ENCODE measurements at regions of chr20 and their contacts with region 1.

Region 1: DNA sequence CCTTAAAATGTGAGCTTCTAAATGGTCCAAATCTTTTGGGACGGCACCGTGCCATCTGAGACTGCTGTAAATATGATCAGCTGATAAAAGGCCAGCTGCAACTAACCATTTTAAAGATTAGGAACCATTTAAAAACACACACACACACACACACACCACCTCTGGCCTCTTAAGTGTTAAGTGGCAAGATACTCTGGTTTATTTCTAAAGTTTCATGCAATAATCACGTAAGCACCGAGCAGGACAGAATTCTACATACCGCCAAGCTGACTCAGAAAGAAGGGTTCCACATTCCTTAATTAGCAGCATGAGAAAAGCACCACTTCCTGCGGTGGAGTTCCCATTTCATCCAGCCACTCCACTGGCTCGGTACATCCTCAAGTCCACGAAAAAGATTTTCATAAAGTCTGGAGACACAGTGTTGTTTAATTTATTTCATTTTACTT is 17.8 kb upstream of the ZNF217 start:
- DNase-seq: no peak
- ATAC-seq: no peak
- H3K4me3 Mint-ChIP-seq: no peak overlapping the region
- H3K27ac Mint-ChIP-seq: peak overlapping the region in 9 of 10 donors; percentile 24 to 85 (median 69)
- H3K4me1 Mint-ChIP-seq: peaks cover 13 to 36% (median 28%) of the 10 kb centered on the region in 4 donors
- H3K27me3 Mint-ChIP-seq: no peaks in the 10 kb centered on the region

Region 2: GRCh38 chr20:53524589-53525312 is 86.7 kb before region 1 on chr20:
- POLR2A ChIA-PET with region 1: no interaction called
- DNase-seq: no peak
- ATAC-seq: no peak
- H3K4me3 Mint-ChIP-seq: no peak overlapping the region
- H3K27ac Mint-ChIP-seq: no peak overlapping the region
- H3K4me1 Mint-ChIP-seq: no peaks in the 10 kb centered on the region
- H3K27me3 Mint-ChIP-seq: peaks cover 0 to 4% (median 0%) of the 10 kb centered on the region in 5 donors

Region 3: DNA sequence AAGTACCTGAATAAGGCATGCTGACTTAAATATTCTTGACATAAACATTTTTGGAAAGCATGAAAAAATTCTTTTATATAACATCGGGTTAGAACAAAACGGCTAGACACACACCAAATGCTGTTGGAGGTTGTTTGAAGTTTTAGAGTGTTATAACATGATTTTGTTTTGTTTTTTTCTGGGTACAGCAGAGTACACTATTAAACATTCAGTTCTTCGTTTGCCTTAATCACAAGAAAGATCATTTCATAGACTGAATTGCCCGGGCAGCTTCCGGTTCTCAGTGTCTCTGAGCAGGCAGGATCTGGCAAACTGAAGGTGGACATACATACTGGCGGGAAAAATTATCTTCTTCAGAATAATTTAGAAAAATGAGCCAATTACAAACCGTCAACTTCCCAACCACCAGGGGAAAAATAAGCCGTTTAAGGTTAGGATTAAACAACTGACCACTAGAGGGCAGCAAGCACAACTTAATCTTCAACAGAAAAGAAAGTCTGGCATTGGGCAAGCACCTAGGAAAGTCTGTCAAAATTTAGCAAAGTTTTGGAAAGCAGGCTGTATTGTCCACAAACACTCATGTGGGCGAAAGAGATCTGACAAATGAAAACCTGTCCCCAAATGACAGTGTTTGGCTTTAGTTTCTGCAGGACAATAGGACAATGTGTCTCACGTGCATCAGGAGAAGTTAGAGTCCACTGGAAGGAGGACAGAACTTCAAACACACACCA is 32.8 kb before region 1 on chr20:
- POLR2A ChIA-PET with region 1: interaction called, 10 read pairs
- DNase-seq: peak in 9 of 10 donors; percentile 51 to 89 (median 74)
- ATAC-seq: peak; percentile 33 to 49
- H3K4me3 Mint-ChIP-seq: peak overlapping the region; percentile 79 to 94 (median 92)
- H3K27ac Mint-ChIP-seq: peak overlapping the region; percentile 91 to 99 (median 96)
- H3K4me1 Mint-ChIP-seq: peaks cover 31 to 94% (median 82%) of the 10 kb centered on the region in 4 donors
- H3K27me3 Mint-ChIP-seq: no peaks in the 10 kb centered on the region

Region 4: GRCh38 chr20:53623454-53624211 is 12.2 kb after region 1 on chr20:
- POLR2A ChIA-PET with region 1: interaction called, 77 read pairs
- DNase-seq: peak in 4 of 10 donors; percentile 5 to 37 (median 20)
- ATAC-seq: peak; percentile 63 to 74
- H3K4me3 Mint-ChIP-seq: peak overlapping the region; percentile 76 to 90 (median 82)
- H3K27ac Mint-ChIP-seq: peak overlapping the region; percentile 89 to 98 (median 94)
- H3K4me1 Mint-ChIP-seq: peaks cover 14 to 52% (median 49%) of the 10 kb centered on the region in 4 donors
- H3K27me3 Mint-ChIP-seq: no peaks in the 10 kb centered on the region

Region 5: DNA sequence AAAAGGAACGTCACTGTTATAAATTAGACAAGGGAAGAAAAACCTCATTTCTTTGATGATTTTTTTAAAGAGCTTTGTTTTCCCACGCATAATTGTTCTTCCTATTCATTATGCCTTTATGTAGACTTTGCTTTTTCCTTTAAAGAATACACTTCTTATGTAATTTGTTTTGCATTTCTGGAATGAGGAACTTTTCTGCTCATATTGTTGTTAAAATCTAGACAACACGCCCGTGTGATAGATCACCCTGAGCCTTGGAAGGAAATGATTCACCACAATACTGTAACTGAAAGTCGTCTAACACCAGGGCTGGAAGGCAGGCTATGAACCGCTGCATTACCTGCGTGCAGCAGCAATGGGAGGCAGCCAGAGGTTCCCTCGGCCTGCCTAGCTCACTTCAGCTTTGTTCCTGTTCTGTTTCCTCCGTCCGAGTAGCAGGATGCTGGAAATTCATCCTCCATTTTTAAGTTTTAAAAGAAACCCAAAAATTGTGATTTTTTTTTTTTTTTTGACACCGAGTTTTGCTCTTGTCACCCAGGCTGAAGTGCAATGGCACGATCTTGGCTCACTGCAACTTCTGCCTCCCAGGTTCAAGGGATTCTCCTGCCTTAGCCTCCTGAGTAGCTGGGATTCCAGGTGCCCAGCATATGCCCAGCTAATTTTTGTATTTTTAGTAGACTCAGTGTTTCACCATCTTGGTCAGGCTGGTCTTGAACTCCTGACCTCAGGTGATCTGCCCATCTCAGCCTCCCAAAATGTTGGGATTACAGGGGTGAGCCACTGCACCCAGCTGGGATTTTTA is 31.8 kb after region 1 on chr20:
- POLR2A ChIA-PET with region 1: interaction called, 42 read pairs
- DNase-seq: peak; percentile 44 to 80 (median 62)
- ATAC-seq: peak; percentile 94 to 97
- H3K4me3 Mint-ChIP-seq: peak overlapping the region; percentile 70 to 94 (median 84)
- H3K27ac Mint-ChIP-seq: peak overlapping the region; percentile 94 to 99 (median 97)
- H3K4me1 Mint-ChIP-seq: peaks cover 26 to 57% (median 51%) of the 10 kb centered on the region in 4 donors
- H3K27me3 Mint-ChIP-seq: no peaks in the 10 kb centered on the region

Region 6: GRCh38 chr20:53708129-53708968 is 96.9 kb after region 1 on chr20:
- POLR2A ChIA-PET with region 1: interaction called, 16 read pairs
- DNase-seq: peak in 4 of 10 donors; percentile 16 to 39 (median 26)
- ATAC-seq: peak; percentile 58 to 66
- H3K4me3 Mint-ChIP-seq: peak overlapping the region; percentile 31 to 85 (median 71)
- H3K27ac Mint-ChIP-seq: peak overlapping the region; percentile 81 to 99 (median 96)
- H3K4me1 Mint-ChIP-seq: peaks cover 23 to 66% (median 53%) of the 10 kb centered on the region in 4 donors
- H3K27me3 Mint-ChIP-seq: no peaks in the 10 kb centered on the region

Region 7: GRCh38 chr20:53793783-53794383 is 182.4 kb after region 1 on chr20:
- POLR2A ChIA-PET with region 1: no interaction called
- DNase-seq: no peak
- ATAC-seq: no peak
- H3K4me3 Mint-ChIP-seq: no peak overlapping the region
- H3K27ac Mint-ChIP-seq: no peak overlapping the region
- H3K4me1 Mint-ChIP-seq: peaks cover 2 to 7% (median 4%) of the 10 kb centered on the region in 4 donors
- H3K27me3 Mint-ChIP-seq: no peaks in the 10 kb centered on the region

Measured in naive thymus-derived CD8-positive, alpha-beta T cell (primary cell).